ENCODE measurements at regions of chr12 and their contacts with region 1.

Region 1: GRCh38 chr12:90909069-90909770 is 45.8 kb downstream of the CCER1 start:
- DNase-seq: peak; percentile 6
- ATAC-seq: peak; percentile 61
- H3K4me3 ChIP-seq: no peak overlapping the region
- H3K27ac ChIP-seq: no peak overlapping the region
- H3K4me1 ChIP-seq: no peaks in the 10 kb centered on the region
- H3K27me3 ChIP-seq: no peaks in the 10 kb centered on the region
- CTCF ChIP-seq: peak; percentile 73
- EP300 ChIP-seq: no peak
- POLR2A ChIP-seq: no peak
- RAD21 ChIP-seq: no peak

Region 2: GRCh38 chr12:90712671-90713070 is 196.5 kb before region 1 on chr12:
- CTCF ChIA-PET with region 1: no interaction called
- POLR2A ChIA-PET with region 1: no interaction called
- in situ Hi-C with region 1: no loop called
- intact Hi-C with region 1: loop called (anchors 10 kb)
- DNase-seq: no peak
- ATAC-seq: no peak
- H3K4me3 ChIP-seq: no peak overlapping the region
- H3K27ac ChIP-seq: no peak overlapping the region
- H3K4me1 ChIP-seq: no peaks in the 10 kb centered on the region
- H3K27me3 ChIP-seq: no peaks in the 10 kb centered on the region
- CTCF ChIP-seq: no peak
- EP300 ChIP-seq: no peak
- POLR2A ChIP-seq: no peak
- RAD21 ChIP-seq: no peak